Posterior vena cava (tissue), 2 donors: ENCODE measurements at regions of chr6 and their contacts with region 1.

Region 1: GRCh38 chr6:31479933-31480535 is 17.9 kb upstream of the MICB start:
- DNase-seq: no peak

Region 2: GRCh38 chr6:31419842-31420241 is 60.2 kb before region 1 on chr6:
- intact Hi-C with region 1: loop called in 1 of 2 experiments (anchors 2 kb)
- DNase-seq: no peak